ENCODE measurements at regions of chr1 and their contacts with region 1.

Region 1: GRCh38 chr1:8878448-8879347 is at the start of gene ENO1:
- DNase-seq: peak; percentile 97 to 98 (median 97)
- H3K4me3 ChIP-seq: peak within 1 kb of the TSS; percentile 80 to 97 (median 90)
- H3K27ac ChIP-seq: peak within 1 kb of the TSS; percentile 72 to 91
- H3K4me1 ChIP-seq: peaks cover 32 to 69% (median 57%) of the 10 kb centered on the region in 4 experiments
- H3K27me3 ChIP-seq: no peaks in the 10 kb centered on the region

Region 2: DNA sequence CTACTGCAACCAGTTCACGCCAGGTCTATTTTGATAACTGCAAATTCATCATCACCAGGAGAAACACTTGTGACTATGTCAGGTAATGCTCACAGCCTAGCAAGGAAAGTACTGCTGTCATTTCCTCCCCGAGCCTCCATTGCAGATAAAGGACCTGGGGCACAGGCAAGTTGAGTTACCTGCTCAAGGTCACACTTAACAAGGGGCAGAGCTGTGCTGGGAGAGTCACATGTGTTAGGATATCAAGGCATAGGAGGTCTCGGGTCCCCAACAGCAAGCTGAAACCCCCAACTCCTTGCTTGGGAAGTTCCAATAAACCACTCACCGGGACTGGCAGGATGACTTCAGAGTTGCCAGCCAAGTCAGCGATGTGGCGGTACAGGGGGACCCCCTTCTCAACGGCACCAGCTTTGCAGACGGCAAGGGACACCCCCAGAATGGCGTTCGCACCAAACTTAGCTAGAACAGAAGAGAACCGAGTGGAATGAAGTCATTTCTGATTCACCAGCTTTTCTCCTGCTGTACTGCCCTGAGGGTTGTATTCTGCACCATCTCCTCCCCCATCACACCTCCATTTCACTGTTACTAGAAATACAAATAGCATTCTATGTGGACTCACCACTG is 11.8 kb before region 1 on chr1:
- CTCF ChIA-PET with region 1: interaction called, 131 read pairs
- POLR2A ChIA-PET with region 1: interaction called, 27 read pairs
- DNase-seq: no peak
- H3K4me3 ChIP-seq: no peak overlapping the region
- H3K27ac ChIP-seq: peak overlapping the region in 1 of 2 experiments; percentile 37
- H3K4me1 ChIP-seq: peaks cover 0 to 28% (median 13%) of the 10 kb centered on the region in 4 experiments
- H3K27me3 ChIP-seq: no peaks in the 10 kb centered on the region

Region 3: GRCh38 chr1:8891401-8891800 is 12.7 kb after region 1 on chr1:
- CTCF ChIA-PET with region 1: interaction called, 11 read pairs
- POLR2A ChIA-PET with region 1: interaction called, 3 read pairs
- DNase-seq: no peak
- H3K4me3 ChIP-seq: no peak overlapping the region
- H3K27ac ChIP-seq: no peak overlapping the region
- H3K4me1 ChIP-seq: no peaks in the 10 kb centered on the region
- H3K27me3 ChIP-seq: no peaks in the 10 kb centered on the region

Region 4: GRCh38 chr1:9084906-9085305 is 206.2 kb after region 1 on chr1:
- CTCF ChIA-PET with region 1: no interaction called
- POLR2A ChIA-PET with region 1: no interaction called
- DNase-seq: peak in 2 of 3 donors; percentile 48 to 57
- H3K4me3 ChIP-seq: no peak overlapping the region
- H3K27ac ChIP-seq: peak overlapping the region in 1 of 2 experiments; percentile 36
- H3K4me1 ChIP-seq: peaks cover 23 to 59% (median 46%) of the 10 kb centered on the region in 4 experiments
- H3K27me3 ChIP-seq: no peaks in the 10 kb centered on the region

Region 5: DNA sequence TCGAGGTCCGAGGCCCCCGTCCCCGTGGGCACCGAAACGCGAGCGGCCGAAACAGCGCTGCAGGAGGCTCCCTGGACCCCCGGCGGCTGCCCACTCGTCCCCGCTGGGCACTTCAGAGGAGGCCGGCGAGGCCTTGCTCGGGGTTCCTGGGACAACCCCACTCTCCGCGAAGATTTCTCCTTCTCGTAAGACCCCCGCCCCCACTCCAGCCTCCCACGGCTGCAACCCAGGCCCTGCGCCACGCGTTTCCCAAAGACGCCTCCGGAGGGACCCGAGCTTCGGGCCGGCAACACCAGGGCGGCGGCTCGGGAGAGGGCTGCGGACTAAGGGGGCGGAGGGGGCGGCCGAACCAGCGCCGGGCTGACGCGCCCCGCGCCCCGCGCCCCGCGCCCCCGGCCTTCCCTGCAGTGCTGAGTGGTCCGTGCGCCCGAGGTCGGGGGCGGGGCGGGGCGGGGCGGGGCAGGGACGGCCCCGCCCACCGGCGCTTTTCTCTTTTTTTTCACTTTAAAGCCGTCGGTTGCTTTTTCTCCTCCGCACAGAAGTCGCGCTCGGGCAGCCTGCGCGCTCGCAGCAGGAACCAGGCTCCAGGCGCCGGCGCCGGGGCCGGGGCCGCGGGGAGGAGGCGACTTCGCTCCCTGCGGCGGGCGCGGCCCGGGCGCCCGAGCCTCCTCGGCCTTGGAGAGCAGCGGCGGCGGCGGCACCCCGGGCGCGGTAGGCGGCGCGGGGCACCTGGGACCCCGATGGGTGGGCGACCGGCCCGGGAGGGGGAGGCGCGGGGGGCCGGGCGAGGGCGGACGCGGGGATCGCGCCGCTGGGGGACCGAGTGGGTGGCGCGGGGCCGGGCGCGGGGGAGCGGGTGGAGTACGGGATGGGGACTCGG is 413.9 kb after region 1 on chr1 and contains the start of gene SPSB1:
- CTCF ChIA-PET with region 1: no interaction called
- POLR2A ChIA-PET with region 1: no interaction called
- DNase-seq: peak; percentile 74 to 83 (median 81)
- H3K4me3 ChIP-seq: peak within 1 kb of the TSS; percentile 32 to 73 (median 67)
- H3K27ac ChIP-seq: no peak within 1 kb of the TSS
- H3K4me1 ChIP-seq: peaks cover 0 to 27% (median 21%) of the 10 kb centered on the region in 4 experiments
- H3K27me3 ChIP-seq: peaks cover 0 to 32% (median 13%) of the 10 kb centered on the region in 5 experiments

Measured in common myeloid progenitor, CD34-positive (primary cell).